Activated naive CD4-positive, alpha-beta T cell treated with anti-CD3 and anti-CD28 coated beads, Interleukin-2, amount 10 ng/mL, durations not matched to agents 7 days and 5 days (primary cell): ENCODE measurements at regions of chr1 and their contacts with region 1.

Region 1: DNA sequence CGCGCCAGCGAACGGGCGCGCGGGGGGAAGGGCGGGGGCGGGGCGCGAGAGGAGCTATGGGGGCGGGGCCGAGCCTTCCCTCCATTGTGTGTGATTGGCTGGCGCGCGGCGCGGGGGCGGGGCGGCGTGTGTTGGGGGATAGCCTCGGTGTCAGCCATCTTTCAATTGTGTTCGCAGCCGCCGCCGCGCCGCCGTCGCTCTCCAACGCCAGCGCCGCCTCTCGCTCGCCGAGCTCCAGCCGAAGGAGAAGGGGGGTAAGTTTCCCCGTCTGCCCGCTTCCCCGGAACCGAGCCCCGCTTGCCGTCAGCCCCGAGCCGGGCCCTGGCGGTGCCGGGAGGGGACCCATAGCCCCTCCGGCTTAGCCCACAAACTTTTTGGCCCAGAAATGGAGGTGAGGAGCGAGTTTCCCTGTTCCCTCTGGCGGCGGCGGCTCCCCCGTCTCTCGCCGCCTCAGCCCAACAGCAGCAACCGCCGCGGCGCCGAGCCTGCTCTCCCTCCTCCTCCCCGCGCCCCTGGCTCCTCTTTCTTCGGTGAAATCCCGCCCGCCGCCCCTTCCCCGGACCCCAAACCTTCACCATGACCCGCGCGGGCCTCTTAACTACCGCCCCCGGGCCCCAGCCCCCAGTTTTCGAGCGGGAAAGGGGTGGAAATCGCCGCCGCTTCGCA is at the start of gene H3-3A:
- DNase-seq: peak; percentile 98
- H3K4me3 Mint-ChIP-seq: peak within 1 kb of the TSS; percentile 100
- H3K27ac Mint-ChIP-seq: peak within 1 kb of the TSS; percentile 100
- H3K4me1 Mint-ChIP-seq: peaks cover 41% of the 10 kb centered on the region
- H3K27me3 Mint-ChIP-seq: no peaks in the 10 kb centered on the region

Region 2: GRCh38 chr1:225999227-225999911 is 63.3 kb before region 1 on chr1 and contains the start of gene SDE2:
- CTCF ChIA-PET with region 1: interaction called, 28 read pairs
- DNase-seq: peak; percentile 100
- H3K4me3 Mint-ChIP-seq: peak within 1 kb of the TSS; percentile 99
- H3K27ac Mint-ChIP-seq: peak within 1 kb of the TSS; percentile 99
- H3K4me1 Mint-ChIP-seq: peaks cover 75% of the 10 kb centered on the region
- H3K27me3 Mint-ChIP-seq: no peaks in the 10 kb centered on the region

Region 3: GRCh38 chr1:226083302-226084101 is 20.8 kb after region 1 on chr1:
- CTCF ChIA-PET with region 1: interaction called, 16 read pairs
- DNase-seq: peak; percentile 94
- H3K4me3 Mint-ChIP-seq: peak overlapping the region; percentile 83
- H3K27ac Mint-ChIP-seq: peak overlapping the region; percentile 44
- H3K4me1 Mint-ChIP-seq: peaks cover 9% of the 10 kb centered on the region
- H3K27me3 Mint-ChIP-seq: peaks cover 50% of the 10 kb centered on the region

Region 4: GRCh38 chr1:226109829-226110248 is 47.1 kb after region 1 on chr1:
- CTCF ChIA-PET with region 1: interaction called, 11 read pairs
- DNase-seq: peak; percentile 89
- H3K4me3 Mint-ChIP-seq: peak overlapping the region; percentile 86
- H3K27ac Mint-ChIP-seq: peak overlapping the region; percentile 90
- H3K4me1 Mint-ChIP-seq: peaks cover 18% of the 10 kb centered on the region
- H3K27me3 Mint-ChIP-seq: peaks cover 38% of the 10 kb centered on the region